HCT116 (cell line): ENCODE measurements at regions of chr16 and their contacts with region 1.

Region 1: DNA sequence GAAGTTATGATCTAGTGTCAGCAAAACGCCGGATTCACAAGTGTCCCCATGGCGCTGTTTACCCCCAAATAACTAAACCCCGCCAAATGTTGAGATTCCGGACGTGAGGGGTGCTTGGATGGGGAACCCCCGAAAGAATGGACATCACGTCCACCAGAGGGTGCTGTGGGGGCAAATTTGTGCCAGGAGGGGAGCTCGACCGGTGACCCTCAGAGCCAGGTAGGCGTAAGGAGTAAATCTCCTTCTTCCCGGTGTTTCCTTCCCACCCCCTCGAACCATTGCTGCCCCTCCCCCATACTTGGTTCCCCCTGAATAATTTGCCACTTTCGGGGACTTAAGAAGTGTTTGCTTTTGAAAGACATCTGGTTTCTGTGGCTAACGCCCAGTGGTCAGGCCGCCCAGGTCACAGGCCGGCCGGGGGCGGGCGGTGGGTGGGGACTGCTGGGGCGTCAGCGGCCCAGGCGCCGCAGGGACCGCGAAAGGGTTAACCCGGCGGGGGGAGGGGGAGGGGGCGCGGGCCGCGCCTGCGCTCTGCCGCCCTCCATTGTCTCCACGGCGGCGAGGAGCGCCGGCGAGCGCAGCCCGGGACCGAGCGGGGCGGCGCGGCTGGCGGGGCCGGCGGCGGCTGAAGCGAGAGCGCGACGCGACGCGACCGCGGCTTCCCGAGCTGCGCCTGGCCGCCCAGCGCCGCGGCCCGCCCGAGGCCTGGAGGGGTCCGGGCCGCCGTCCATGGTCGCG is at the start of gene ZNRF1:
- DNase-seq: peak; percentile 70
- ATAC-seq: peak; percentile 81
- H3K4me3 ChIP-seq: peak within 1 kb of the TSS; percentile 70 to 71
- H3K27ac ChIP-seq: peak within 1 kb of the TSS; percentile 81
- H3K4me1 ChIP-seq: peaks cover 32 to 54% of the 10 kb centered on the region in 2 experiments
- H3K27me3 ChIP-seq: no peaks in the 10 kb centered on the region
- CTCF ChIP-seq: peak; percentile 74 to 88 (median 75)
- POLR2A ChIP-seq: peak; percentile 69
- RAD21 ChIP-seq: peak; percentile 93
- total RNA-seq, gene ZNRF1: 48.2 TPM

Region 2: DNA sequence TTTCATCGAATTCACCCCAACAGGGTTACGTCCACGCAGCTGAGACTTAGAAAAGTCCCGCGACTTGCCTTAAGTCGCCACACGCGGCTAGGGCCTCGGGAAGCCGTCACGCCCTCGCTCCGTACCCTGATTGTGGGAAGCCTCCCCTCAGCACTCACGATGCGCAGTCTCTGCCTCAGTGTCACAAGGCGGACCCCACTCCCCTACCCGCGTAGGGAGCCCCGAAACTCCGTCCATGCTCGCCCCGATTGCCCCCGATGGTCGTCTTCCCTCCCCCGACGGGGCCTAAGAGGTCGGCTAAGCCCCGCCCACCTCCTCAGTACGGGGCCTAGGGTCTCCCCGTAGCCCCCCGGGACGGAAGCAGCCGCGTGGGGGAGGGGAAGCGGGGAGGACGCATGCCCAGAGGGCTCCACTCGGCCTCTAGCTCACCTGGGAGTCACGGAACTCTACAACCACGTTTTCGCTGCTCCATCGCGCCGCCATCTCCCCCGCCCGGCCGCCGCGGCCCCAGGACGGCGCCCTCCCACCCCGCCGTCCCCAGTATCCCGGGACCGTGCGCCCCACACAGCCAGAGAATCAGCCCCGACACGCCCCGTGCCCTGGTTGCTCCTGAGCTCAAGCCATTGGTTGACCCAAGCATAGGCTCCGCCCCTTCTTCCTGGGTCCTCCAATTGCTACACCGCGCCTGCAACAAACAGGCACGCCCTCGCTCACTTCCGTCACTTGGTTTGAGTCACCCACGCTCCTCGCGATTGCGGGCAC is 13.9 kb before region 1 on chr16 and contains the start of gene WDR59:
- CTCF ChIA-PET with region 1: interaction called, 41 read pairs
- POLR2A ChIA-PET with region 1: interaction called, 6 read pairs
- RAD21 ChIA-PET with region 1: no interaction called
- intact Hi-C with region 1: no loop called
- DNase-seq: no peak
- ATAC-seq: peak; percentile 95
- H3K4me3 ChIP-seq: peak within 1 kb of the TSS; percentile 99 to 100
- H3K27ac ChIP-seq: peak within 1 kb of the TSS; percentile 74
- H3K4me1 ChIP-seq: peaks cover 5 to 22% of the 10 kb centered on the region in 2 experiments
- H3K27me3 ChIP-seq: no peaks in the 10 kb centered on the region
- CTCF ChIP-seq: no peak
- POLR2A ChIP-seq: no peak
- RAD21 ChIP-seq: no peak
- total RNA-seq, gene WDR59: 96.9 TPM

Region 3: DNA sequence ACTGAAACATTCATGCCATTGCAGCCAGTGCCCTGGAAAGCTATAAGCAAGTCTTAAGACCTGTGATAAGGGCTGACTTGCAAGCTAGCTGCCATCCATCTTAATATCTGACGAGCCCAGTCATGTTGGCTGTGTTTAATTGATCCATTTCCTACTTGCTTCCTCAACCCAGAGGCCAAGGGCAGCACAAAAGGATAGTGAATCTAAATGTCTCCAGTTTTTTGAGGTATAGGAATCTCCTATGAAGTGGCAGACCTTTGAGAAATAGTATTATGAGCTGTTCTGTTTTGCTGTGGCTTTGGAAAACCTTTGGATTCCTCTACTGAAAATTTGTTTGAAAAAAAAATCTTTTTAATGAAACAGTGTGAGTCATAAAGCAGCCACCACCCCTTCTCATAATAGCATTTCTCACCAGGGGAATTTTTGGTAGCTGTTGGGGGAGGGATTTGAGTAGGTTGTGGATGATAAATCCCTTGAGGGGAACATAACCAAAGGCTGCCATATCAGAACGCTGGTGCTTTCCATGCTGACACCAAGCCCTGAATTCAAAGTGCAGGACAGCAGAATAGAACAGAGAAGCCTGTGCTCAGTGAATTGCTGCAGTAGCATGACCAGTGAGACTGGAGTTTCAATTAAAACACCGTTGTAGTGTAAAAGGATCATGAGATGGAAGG is 13.1 kb after region 1 on chr16:
- CTCF ChIA-PET with region 1: interaction called, 19 read pairs
- POLR2A ChIA-PET with region 1: interaction called, 3 read pairs
- RAD21 ChIA-PET with region 1: no interaction called
- intact Hi-C with region 1: no loop called
- DNase-seq: peak; percentile 75
- ATAC-seq: peak; percentile 83
- H3K4me3 ChIP-seq: peak overlapping the region; percentile 24 to 46
- H3K27ac ChIP-seq: peak overlapping the region; percentile 88
- H3K4me1 ChIP-seq: peaks cover 65 to 76% of the 10 kb centered on the region in 2 experiments
- H3K27me3 ChIP-seq: no peaks in the 10 kb centered on the region
- CTCF ChIP-seq: no peak
- POLR2A ChIP-seq: no peak
- RAD21 ChIP-seq: peak; percentile 38; the same call in 1 of the 2 replicates

Region 4: DNA sequence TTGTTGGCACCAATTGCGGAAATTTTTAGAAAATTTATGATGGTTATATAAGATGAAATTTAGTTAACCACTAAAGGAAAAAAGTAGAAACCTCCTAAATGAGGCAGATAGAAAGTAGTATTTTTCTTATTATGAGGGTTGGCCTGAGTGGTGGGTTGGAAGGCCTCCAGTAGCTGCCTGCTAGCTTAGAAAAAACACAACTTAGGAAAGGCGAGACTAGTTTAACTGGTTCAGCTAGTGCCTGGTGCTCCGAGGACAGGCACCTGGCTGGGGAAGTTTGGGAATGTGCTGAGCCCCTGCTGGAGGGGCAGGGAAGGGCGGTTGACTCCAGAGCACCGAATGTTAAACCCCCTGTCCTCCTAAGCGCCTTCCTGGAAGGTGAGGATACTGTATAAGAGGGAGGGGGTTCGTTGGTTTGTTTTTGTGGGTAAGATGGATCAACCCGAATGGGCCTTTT is 98.0 kb after region 1 on chr16:
- CTCF ChIA-PET with region 1: interaction called, 9 read pairs
- POLR2A ChIA-PET with region 1: no interaction called
- RAD21 ChIA-PET with region 1: no interaction called
- intact Hi-C with region 1: loop called (anchors 1 kb)
- DNase-seq: peak; percentile 63
- ATAC-seq: peak; percentile 82
- H3K4me3 ChIP-seq: no peak overlapping the region
- H3K27ac ChIP-seq: peak overlapping the region; percentile 46
- H3K4me1 ChIP-seq: peaks cover 55 to 67% of the 10 kb centered on the region in 2 experiments
- H3K27me3 ChIP-seq: no peaks in the 10 kb centered on the region
- CTCF ChIP-seq: peak in 2 of 3 experiments; percentile 66 to 68; a peak in 4 of 6 replicates
- POLR2A ChIP-seq: no peak
- RAD21 ChIP-seq: peak; percentile 61

Region 5: GRCh38 chr16:75110637-75111513 is 112.2 kb after region 1 on chr16:
- CTCF ChIA-PET with region 1: interaction called, 116 read pairs
- POLR2A ChIA-PET with region 1: interaction called, 19 read pairs
- RAD21 ChIA-PET with region 1: interaction called, 10 to 33 read pairs
- intact Hi-C with region 1: loop called (anchors 1 kb)
- DNase-seq: peak; percentile 80
- ATAC-seq: peak; percentile 76
- H3K4me3 ChIP-seq: peak overlapping the region in 1 of 2 experiments; percentile 36; a peak in 2 of 4 replicates
- H3K27ac ChIP-seq: peak overlapping the region; percentile 91
- H3K4me1 ChIP-seq: peaks cover 35 to 49% of the 10 kb centered on the region in 2 experiments
- H3K27me3 ChIP-seq: no peaks in the 10 kb centered on the region
- CTCF ChIP-seq: peak in 2 of 3 experiments; percentile 84 to 87; a peak in 4 of 6 replicates
- POLR2A ChIP-seq: no peak
- RAD21 ChIP-seq: no peak